IMR-90 (cell line): ENCODE measurements at regions of chr3 and their contacts with region 1.

Region 1: GRCh38 chr3:2554656-2555055 is 456.0 kb downstream of the CNTN4 start:
- DNase-seq: no peak
- ATAC-seq: no peak
- H3K4me3 ChIP-seq: no peak overlapping the region
- H3K27ac ChIP-seq: no peak overlapping the region
- H3K4me1 ChIP-seq: no peaks in the 10 kb centered on the region
- H3K27me3 ChIP-seq: no peaks in the 10 kb centered on the region
- CTCF ChIP-seq: no peak
- POLR2A ChIP-seq: no peak
- RAD21 ChIP-seq: no peak

Region 2: GRCh38 chr3:2856138-2857133 is 301.8 kb after region 1 on chr3:
- CTCF ChIA-PET with region 1: no interaction called
- POLR2A ChIA-PET with region 1: no interaction called
- dilution Hi-C with region 1: no loop called
- in situ Hi-C with region 1: no loop called
- intact Hi-C with region 1: loop called (anchors 10 kb)
- DNase-seq: no peak
- ATAC-seq: no peak
- H3K4me3 ChIP-seq: no peak overlapping the region
- H3K27ac ChIP-seq: no peak overlapping the region
- H3K4me1 ChIP-seq: no peaks in the 10 kb centered on the region
- H3K27me3 ChIP-seq: no peaks in the 10 kb centered on the region
- CTCF ChIP-seq: no peak
- POLR2A ChIP-seq: no peak
- RAD21 ChIP-seq: no peak